Panc1 (cell line): ENCODE measurements at regions of chr3 and their contacts with region 1.

Region 1: DNA sequence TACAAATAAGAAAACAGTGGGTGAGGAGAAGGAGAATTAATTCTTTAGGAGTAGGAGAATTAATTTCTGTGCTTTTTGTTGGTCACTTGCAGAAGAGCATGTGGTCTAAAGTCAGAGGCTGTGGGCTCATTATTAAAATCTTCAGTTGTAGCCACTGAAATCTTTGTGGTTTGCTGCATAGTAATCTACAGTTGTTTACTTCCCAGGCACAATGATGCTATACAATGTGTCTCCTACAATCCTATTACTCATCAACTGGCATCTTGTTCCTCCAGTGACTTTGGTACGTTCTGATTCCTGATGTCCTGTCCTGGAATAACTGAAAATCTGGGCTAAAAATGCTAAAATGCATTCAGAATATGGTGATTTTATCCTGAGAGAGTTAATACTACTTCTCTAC is 21.0 kb downstream of the IFT122 start:
- DNase-seq: no peak
- ATAC-seq: no peak; the same call in 1 of the 2 replicates
- H3K4me3 ChIP-seq: no peak overlapping the region
- H3K27ac ChIP-seq: no peak overlapping the region
- H3K4me1 ChIP-seq: 0 out of 2 replicates have a peak, but pooled peaks cover 5% of the 10 kb centered on the region
- H3K27me3 ChIP-seq: no peaks in the 10 kb centered on the region
- CTCF ChIP-seq: no peak

Region 2: DNA sequence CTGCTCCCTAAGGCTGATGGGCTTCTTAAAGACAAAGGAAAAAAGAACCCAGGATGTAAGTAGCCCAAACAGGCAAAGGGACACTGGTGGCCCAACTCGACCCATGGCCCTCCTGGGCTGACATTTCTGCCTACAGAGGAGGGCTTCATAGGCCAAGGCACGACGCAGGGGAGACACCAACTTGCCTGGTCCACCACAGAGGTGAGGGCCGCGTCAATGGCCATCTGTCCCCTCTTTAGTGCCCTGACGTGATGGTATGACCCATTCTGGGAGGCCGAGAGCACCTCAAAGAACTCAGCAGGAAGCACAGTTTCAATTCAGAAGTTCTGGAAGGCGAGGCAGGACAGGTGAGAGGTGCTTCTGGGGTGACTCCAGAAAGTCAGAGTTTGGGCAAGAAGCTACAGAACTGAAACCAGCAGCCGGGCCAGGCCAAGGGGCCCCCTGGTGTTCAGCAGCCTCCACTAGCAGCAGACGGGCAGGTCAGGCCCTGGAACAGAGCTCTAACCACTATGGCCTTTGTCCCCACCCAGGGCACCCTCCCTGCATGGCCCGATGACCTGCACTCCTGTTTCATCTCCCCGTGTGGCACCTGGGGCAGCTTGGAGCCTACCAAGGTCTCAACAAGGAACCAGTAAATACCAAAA is 137.2 kb before region 1 on chr3:
- CTCF ChIA-PET with region 1: no interaction called
- POLR2A ChIA-PET with region 1: no interaction called
- in situ Hi-C with region 1: no loop called
- intact Hi-C with region 1: no loop called
- DNase-seq: no peak
- ATAC-seq: no peak
- H3K4me3 ChIP-seq: no peak overlapping the region
- H3K27ac ChIP-seq: no peak overlapping the region
- H3K4me1 ChIP-seq: no peaks in the 10 kb centered on the region
- H3K27me3 ChIP-seq: no peaks in the 10 kb centered on the region
- CTCF ChIP-seq: no peak; the same call in 1 of the 2 replicates

Region 3: DNA sequence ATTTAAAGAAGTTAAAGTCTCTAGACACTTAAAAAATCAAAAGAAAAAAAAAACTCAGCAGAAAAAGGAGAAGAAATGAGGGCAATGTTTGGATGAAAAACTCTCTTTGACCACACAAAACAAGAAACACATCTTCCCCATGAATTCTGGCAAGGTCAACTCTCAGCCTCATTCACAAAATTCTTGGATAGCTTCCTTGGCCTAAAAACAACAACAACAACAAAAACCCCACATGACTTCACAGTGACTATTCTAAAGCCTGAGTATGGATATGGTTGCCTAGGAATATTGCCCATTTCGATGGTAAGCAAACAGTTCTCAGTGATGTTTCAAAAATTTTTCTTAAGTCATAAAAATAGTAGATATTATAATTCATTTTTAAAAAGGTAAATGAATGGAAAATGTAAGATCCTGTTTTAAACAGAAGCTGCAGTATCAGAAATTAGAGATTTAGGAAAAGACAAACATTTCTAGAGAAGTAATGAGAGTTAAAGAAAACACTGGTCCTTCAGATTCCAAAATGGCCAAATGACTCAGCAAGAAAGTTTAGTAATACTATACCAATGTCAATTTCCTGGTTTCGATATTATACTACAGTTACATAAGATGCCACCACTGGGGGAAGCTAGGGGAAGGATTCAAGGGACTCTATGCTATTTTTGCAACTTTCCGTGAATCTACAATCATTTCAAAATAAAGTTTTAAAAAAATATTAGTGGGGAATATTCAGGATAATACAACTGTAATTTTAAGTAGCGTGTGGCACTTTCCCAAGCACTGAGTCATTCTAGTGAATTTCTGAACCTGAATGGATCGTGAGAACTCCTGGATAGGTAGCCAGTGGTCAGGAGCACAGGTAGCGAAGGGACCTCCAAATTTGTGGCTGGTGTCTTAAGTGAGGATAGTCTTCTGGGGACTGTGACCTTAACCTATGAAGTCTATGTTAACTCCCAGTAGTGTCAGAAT is 394.7 kb after region 1 on chr3:
- CTCF ChIA-PET with region 1: no interaction called
- POLR2A ChIA-PET with region 1: interaction called, 10 read pairs
- in situ Hi-C with region 1: no loop called
- intact Hi-C with region 1: no loop called
- DNase-seq: no peak
- ATAC-seq: no peak
- H3K4me3 ChIP-seq: no peak overlapping the region
- H3K27ac ChIP-seq: peak overlapping the region; percentile 1; the same call in 1 of the 2 replicates
- H3K4me1 ChIP-seq: no peaks in the 10 kb centered on the region; the same call in 1 of the 2 replicates
- H3K27me3 ChIP-seq: no peaks in the 10 kb centered on the region
- CTCF ChIP-seq: no peak